Calu3 (cell line): ENCODE measurements at regions of chr12 and their contacts with region 1.

Region 1: GRCh38 chr12:21501379-21501956 is at the starts of genes GOLT1B and RECQL:
- DNase-seq: peak; percentile 90
- H3K4me3 Mint-ChIP-seq: no peak within 1 kb of the TSS
- H3K27ac Mint-ChIP-seq: no peak within 1 kb of the TSS
- H3K4me1 Mint-ChIP-seq: peaks cover 9% of the 10 kb centered on the region
- H3K27me3 Mint-ChIP-seq: no peaks in the 10 kb centered on the region
- CTCF ChIP-seq: no peak
- total RNA-seq, gene GOLT1B: 30.7 and 37.1 TPM in 2 replicates
- total RNA-seq, gene RECQL: 28.0 and 32.1 TPM in 2 replicates

Region 2: GRCh38 chr12:21476949-21477348 is 24.5 kb before region 1 on chr12:
- CTCF ChIA-PET with region 1: no interaction called
- intact Hi-C with region 1: no loop called
- DNase-seq: no peak
- H3K4me3 Mint-ChIP-seq: no peak overlapping the region
- H3K27ac Mint-ChIP-seq: no peak overlapping the region
- H3K4me1 Mint-ChIP-seq: no peaks in the 10 kb centered on the region
- H3K27me3 Mint-ChIP-seq: no peaks in the 10 kb centered on the region
- CTCF ChIP-seq: no peak

Region 3: DNA sequence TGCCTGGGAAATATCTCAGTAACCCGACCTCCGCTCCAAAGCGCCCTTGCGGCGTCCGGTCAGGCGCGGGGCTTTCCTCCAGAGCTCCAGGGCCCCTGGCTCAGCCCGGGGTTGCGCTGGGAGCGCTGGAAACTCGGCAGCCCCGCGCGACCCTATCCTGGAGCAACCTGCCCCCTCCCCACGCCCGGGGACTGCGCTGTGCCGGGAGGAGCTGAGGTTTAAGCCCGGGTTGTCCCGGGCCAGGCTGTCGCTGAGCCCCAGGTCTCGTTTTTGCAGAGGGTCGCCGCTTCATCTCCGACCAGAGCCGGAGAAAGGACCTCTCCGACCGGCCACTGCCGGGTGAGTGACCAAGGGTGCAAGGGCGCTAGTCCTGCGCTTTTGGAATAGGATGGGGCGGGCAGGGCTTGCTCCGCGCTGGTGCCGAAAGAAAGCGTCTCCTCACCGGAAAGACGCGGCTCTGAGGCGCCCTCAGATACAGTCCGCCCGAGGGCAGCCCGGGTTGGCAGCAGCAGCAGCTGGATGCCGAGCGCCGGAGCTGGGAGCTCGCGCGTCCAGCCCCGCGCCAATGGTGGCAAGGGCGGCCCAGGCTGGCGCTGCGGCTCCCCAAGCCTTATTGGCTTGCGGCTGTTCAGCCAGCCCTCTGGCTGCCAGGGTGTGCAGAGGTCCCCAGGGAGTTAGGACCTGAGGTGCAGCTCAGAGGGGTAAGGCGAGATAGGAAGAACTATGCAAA is 26.1 kb after region 1 on chr12:
- CTCF ChIA-PET with region 1: no interaction called
- intact Hi-C with region 1: loop called (anchors 1 kb)
- DNase-seq: peak; percentile 52
- H3K4me3 Mint-ChIP-seq: peak overlapping the region; percentile 69
- H3K27ac Mint-ChIP-seq: no peak overlapping the region
- H3K4me1 Mint-ChIP-seq: no peaks in the 10 kb centered on the region
- H3K27me3 Mint-ChIP-seq: peaks cover 26% of the 10 kb centered on the region
- CTCF ChIP-seq: no peak

Region 4: GRCh38 chr12:21683115-21683514 is 181.6 kb after region 1 on chr12:
- CTCF ChIA-PET with region 1: no interaction called
- intact Hi-C with region 1: loop called (anchors 10 kb)
- DNase-seq: no peak
- H3K4me3 Mint-ChIP-seq: no peak overlapping the region
- H3K27ac Mint-ChIP-seq: no peak overlapping the region
- H3K4me1 Mint-ChIP-seq: no peaks in the 10 kb centered on the region
- H3K27me3 Mint-ChIP-seq: peaks cover 16% of the 10 kb centered on the region
- CTCF ChIP-seq: no peak